Activated CD4-positive, alpha-beta T cell treated with anti-CD3 and anti-CD28 coated beads for 36 hours (primary cell): ENCODE measurements at regions of chr9 and their contacts with region 1.

Region 1: DNA sequence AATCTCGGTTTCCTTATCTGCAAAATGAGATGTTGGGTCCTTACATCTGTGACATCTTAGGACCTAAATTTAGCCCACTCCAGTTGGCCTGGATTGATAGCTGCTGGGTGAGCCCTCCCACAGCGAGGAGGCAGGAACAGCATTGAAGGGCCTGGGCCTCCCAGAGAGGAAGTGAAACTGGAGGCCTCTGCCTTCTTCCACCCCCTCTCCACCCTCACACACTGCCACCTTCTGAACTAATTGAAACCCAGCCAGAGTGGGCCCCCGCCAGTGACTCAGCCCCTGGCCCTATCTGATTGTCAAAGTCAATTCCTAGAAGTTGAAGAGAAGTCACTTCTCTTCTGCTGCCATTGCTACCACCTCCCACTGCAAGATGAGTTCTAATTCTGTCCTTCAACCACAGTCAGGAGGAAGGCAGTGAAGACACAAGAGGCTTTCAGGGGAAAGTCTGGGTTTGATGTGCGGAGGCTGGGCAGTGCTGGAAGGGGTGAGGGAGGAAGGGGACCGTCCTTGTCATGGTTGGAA is 55.2 kb upstream of the NEK6 start:
- DNase-seq: peak; percentile 93
- ATAC-seq: peak; percentile 94
- H3K4me3 Mint-ChIP-seq: peak overlapping the region; percentile 56
- H3K27ac Mint-ChIP-seq: peak overlapping the region; percentile 97
- H3K4me1 Mint-ChIP-seq: peaks cover 40% of the 10 kb centered on the region
- H3K27me3 Mint-ChIP-seq: peaks cover 8% of the 10 kb centered on the region

Region 2: DNA sequence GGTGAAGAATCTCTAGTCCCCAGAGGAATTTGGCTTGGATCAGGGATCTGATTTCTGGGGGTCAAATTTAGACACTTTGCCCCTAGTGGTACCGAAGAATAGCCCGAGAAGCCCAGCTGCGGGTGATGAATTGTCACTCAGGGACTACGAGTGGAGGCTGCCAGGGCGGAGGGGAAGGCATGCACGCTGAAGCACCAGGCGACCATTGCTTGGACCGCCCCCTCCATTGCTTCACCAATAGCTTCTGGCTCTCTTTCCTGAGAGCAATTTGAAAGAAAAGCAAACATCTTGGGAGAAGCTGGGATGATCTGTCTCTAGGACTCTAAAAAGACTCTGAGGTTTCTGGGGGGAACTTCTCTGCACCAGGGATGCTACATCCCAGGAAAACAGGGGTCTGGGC is 708.9 kb before region 1 on chr9:
- CTCF ChIA-PET with region 1: no interaction called
- POLR2A ChIA-PET with region 1: no interaction called
- intact Hi-C with region 1: no loop called
- DNase-seq: no peak
- ATAC-seq: no peak
- H3K4me3 Mint-ChIP-seq: no peak overlapping the region
- H3K27ac Mint-ChIP-seq: no peak overlapping the region
- H3K4me1 Mint-ChIP-seq: no peaks in the 10 kb centered on the region
- H3K27me3 Mint-ChIP-seq: no peaks in the 10 kb centered on the region

Region 3: DNA sequence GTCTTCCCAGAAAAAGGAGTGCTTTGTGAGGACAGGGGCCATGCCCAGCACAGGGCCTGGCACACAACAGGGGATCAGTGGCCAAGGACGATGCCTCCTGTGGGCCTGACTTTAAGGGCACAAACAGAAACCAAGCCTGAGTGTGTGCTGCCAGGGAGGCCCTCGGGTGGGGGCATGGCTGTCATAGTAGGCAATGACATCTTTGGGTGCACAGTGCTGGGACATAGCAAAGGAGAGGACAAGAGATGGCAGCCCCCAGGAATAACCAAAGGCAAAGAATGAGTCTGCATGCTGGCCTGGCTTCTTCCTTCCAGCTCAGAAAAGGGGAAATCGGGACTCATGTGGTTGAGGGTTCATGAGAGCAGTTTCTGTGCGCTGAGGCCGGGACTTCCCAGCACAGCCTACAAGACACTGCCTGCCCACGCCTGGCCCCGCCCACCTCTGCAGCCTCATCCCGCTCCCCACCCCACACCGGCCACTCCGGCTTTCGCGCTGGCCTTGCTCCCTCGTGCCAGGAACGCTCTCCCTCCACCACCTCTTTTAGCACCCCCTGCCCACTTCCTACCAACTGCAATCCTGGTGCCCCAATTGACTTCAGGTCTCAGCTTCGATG is 204.7 kb before region 1 on chr9:
- CTCF ChIA-PET with region 1: no interaction called
- POLR2A ChIA-PET with region 1: no interaction called
- intact Hi-C with region 1: no loop called
- DNase-seq: peak; percentile 64
- ATAC-seq: peak; percentile 60
- H3K4me3 Mint-ChIP-seq: peak overlapping the region; percentile 23
- H3K27ac Mint-ChIP-seq: peak overlapping the region; percentile 72
- H3K4me1 Mint-ChIP-seq: peaks cover 35% of the 10 kb centered on the region
- H3K27me3 Mint-ChIP-seq: peaks cover 72% of the 10 kb centered on the region

Region 4: DNA sequence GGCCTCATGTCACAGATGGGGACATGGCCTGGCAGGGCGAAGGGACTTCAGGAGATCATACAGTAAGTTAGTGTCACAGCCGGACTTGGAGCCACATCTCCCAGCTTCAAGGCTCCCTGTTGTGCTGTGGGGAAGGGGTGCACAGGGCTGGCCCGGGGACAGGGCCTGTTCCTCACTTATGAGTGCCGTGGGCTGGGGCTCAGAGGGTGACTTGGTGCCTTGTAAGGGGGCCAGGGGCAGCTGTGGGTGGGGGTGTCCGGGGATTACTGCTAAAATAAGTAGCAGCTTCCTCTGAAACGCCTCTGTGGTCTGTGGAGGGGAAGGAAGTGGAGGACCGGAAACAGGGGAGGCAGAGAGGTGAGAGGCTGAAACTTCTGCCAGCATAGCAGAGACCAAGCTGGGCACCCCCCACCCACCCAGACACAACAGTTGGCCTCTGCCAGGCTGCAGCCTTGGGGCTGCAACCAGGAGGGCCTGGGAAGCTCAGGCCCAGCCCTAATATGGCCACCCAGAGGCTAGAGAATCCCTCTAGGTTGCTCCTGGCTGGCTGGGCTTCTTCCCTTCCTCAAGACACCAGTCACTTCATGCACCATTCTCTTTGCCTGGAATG is 14.2 kb after region 1 on chr9:
- CTCF ChIA-PET with region 1: interaction called, 5 read pairs
- POLR2A ChIA-PET with region 1: interaction called, 3 read pairs
- intact Hi-C with region 1: loop called in 1 of 2 experiments (anchors 2 kb)
- DNase-seq: peak; percentile 76
- ATAC-seq: peak; percentile 67
- H3K4me3 Mint-ChIP-seq: no peak overlapping the region
- H3K27ac Mint-ChIP-seq: peak overlapping the region; percentile 90
- H3K4me1 Mint-ChIP-seq: peaks cover 59% of the 10 kb centered on the region
- H3K27me3 Mint-ChIP-seq: no peaks in the 10 kb centered on the region

Region 5: DNA sequence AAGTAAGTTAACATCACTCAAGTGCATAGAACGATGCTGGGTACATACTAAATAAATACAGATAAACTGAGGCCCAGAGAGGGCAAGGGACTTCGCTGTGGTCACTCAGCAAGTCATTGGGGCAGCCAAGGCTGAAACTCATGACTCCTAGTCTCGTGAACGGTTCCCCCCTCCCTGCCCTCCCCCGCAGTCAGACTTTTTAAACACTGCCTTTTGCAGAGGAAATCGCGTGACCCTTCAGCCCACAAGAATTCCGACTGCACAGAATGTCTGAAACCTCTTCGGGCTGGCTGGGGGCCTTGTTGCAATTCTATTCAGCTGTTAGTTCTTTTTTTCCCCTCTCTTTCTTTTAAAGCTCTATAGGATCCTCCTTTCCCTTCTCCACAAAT is 83.4 kb after region 1 on chr9:
- CTCF ChIA-PET with region 1: no interaction called
- POLR2A ChIA-PET with region 1: no interaction called
- intact Hi-C with region 1: loop called in 1 of 2 experiments (anchors 1 kb)
- DNase-seq: peak; percentile 72
- ATAC-seq: peak; percentile 37
- H3K4me3 Mint-ChIP-seq: peak overlapping the region; percentile 58
- H3K27ac Mint-ChIP-seq: peak overlapping the region; percentile 93
- H3K4me1 Mint-ChIP-seq: peaks cover 31% of the 10 kb centered on the region
- H3K27me3 Mint-ChIP-seq: no peaks in the 10 kb centered on the region